ENCODE measurements at regions of chr2 and their contacts with region 1.

Region 1: DNA sequence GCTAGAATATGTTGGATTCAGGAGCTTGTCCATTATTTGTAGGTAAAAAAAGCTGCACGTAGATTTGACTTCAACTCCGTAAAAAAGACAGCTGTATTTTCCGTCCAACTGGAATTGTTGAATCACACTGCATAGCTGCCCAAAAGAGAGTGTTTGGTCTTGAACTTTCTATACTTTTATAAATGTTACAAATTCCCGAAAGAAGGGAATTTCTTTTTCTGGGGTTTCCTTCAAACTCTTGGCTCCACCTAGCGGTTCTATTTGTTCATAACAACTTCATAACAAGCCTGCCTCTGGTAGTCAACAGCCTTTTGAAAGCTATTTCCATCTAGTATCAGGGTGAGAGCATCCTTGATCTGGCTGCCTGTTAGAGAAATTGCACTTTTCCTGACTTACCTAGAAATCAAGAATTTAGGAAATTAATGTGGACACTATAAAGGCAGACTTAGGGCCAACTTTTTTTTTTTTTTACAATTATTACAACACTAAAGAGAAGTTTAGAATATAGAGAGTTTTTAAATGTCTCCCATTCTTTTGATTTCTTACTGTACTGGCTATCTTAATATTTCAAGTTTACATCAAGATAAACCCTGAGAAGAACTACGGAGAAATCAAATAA is 48.1 kb downstream of the TMEM185B start:
- DNase-seq: no peak
- ATAC-seq: peak; percentile 40

Region 2: GRCh38 chr2:119702918-119703401 is 472.1 kb before region 1 on chr2:
- intact Hi-C with region 1: loop called (anchors 5 kb)
- DNase-seq: peak; percentile 87
- ATAC-seq: peak; percentile 86

Region 3: GRCh38 chr2:119759451-119760236 is 415.4 kb before region 1 on chr2 and contains the start of gene PTPN4:
- intact Hi-C with region 1: loop called (anchors 5 kb)
- DNase-seq: peak; percentile 99
- ATAC-seq: peak; percentile 98
- total RNA-seq, gene PTPN4: 40.4 TPM

Region 4: GRCh38 chr2:119826370-119826961 is 348.6 kb before region 1 on chr2:
- intact Hi-C with region 1: loop called (anchors 10 kb)
- DNase-seq: no peak
- ATAC-seq: peak; percentile 39

Region 5: GRCh38 chr2:120012771-120013596 is 162.1 kb before region 1 on chr2 and contains the start of gene EPB41L5:
- intact Hi-C with region 1: loop called (anchors 5 kb)
- DNase-seq: peak; percentile 98
- ATAC-seq: peak; percentile 99
- total RNA-seq, gene EPB41L5: 8.2 TPM

Region 6: DNA sequence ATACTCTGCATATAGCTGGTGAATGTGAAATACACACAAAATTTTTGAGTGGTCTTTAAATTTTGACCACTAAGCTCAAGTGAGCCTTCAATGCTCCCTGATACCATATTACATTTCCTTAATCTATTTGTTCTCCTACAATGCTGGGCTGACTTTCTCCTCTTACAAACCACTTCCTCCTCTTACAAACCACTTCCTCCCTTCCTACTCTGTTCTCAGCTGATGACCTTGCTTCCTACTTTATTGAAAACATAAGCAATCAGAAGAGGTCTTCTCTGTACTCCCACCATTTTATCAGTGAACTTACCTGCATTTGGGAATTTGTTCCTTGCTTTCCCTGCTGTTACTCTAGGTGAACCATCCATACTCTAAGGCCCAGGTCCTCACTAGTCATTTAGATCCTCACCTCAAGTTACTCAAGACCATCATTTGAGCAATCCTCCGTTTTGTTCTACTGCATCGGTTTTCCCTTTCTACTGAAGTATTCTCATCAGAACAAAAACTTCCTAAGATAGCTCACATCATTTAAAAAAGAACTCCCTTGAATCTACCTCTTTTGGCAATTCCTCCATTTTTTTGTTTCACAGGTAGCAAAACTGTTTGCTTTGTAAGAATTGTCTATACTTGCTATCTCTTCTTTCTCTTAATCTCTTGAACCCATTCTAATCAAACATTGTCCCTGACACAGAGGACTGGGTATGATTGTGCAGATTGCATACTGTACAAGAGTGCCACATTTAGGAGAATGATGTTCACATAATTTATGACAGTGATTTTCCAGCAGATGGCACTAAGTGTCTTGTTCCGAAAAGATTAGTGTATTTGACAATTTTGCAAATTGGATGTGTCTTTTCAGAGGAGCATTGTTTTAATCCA is 65.6 kb before region 1 on chr2:
- intact Hi-C with region 1: loop called (anchors 5 kb)
- DNase-seq: no peak
- ATAC-seq: peak; percentile 55

Region 7: GRCh38 chr2:120486441-120487378 is 311.6 kb after region 1 on chr2:
- intact Hi-C with region 1: no loop called
- DNase-seq: peak; percentile 28
- ATAC-seq: no peak

Region 8: GRCh38 chr2:121330891-121331290 is 1155.8 kb after region 1 on chr2:
- intact Hi-C with region 1: no loop called
- DNase-seq: no peak
- ATAC-seq: no peak

Measured in Right ventricle myocardium inferior (tissue), 1 donor.